Common myeloid progenitor, CD34-positive (primary cell): ENCODE measurements at regions of chr6 and their contacts with region 1.

Region 1: DNA sequence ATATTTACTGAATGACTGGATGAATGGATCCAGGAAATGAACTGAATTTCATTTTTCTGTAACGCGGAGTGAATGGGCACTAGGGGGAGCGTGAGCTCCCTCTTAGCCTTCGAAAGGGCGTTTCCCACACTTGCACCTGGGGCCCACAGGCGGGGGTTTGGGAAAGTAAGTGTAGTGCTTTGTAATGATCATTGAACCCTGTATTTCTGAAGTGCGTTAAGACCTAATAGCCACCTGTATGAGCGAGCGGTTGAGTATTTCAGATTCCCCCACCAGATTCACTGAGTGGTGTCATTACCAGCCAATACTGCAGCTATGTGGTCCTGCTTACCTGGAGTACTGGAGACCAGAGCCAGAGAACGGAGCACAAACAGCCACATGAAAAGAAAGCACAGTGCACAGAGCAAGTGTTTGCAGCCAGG is 10.5 kb downstream of the SYTL3 start:
- DNase-seq: peak in 2 of 3 donors; percentile 51 to 57
- H3K4me3 ChIP-seq: no peak overlapping the region
- H3K27ac ChIP-seq: no peak overlapping the region
- H3K4me1 ChIP-seq: peaks cover 9 to 42% (median 30%) of the 10 kb centered on the region in 4 experiments
- H3K27me3 ChIP-seq: peaks cover 0 to 8% (median 7%) of the 10 kb centered on the region in 5 experiments

Region 2: GRCh38 chr6:158545043-158545966 is 115.0 kb before region 1 on chr6:
- CTCF ChIA-PET with region 1: no interaction called
- POLR2A ChIA-PET with region 1: no interaction called
- DNase-seq: no peak
- H3K4me3 ChIP-seq: no peak overlapping the region
- H3K27ac ChIP-seq: no peak overlapping the region
- H3K4me1 ChIP-seq: no peaks in the 10 kb centered on the region
- H3K27me3 ChIP-seq: peaks cover 0 to 9% (median 0%) of the 10 kb centered on the region in 5 experiments

Region 3: DNA sequence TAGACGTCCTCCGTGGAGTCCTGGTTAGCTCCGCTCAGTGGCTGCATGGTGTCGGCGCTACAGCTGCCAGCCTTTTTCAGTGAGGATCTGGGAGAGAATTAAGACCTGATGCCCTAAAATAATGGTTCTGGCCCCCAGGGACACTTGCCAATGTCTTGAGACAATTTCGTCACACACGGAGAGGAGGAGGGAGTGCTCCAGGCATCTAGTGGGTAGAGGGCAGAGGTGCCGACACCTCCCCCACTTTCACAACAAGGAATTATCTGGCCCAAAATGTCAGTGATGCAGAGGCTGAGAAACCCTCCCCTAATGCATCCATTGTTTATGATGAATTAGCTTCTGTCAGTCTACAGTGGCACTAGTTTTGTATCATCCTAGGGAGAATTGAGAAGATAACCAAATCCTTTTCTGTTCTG is 76.1 kb before region 1 on chr6:
- CTCF ChIA-PET with region 1: no interaction called
- POLR2A ChIA-PET with region 1: no interaction called
- DNase-seq: no peak
- H3K4me3 ChIP-seq: no peak overlapping the region
- H3K27ac ChIP-seq: no peak overlapping the region
- H3K4me1 ChIP-seq: no peaks in the 10 kb centered on the region
- H3K27me3 ChIP-seq: no peaks in the 10 kb centered on the region

Region 4: GRCh38 chr6:158644231-158645063 is 15.9 kb before region 1 on chr6 and contains the start of gene DYNLT1:
- CTCF ChIA-PET with region 1: interaction called, 50 read pairs
- POLR2A ChIA-PET with region 1: no interaction called
- DNase-seq: peak; percentile 78 to 92 (median 90)
- H3K4me3 ChIP-seq: peak within 1 kb of the TSS; percentile 73 to 96 (median 90)
- H3K27ac ChIP-seq: peak within 1 kb of the TSS; percentile 82 to 89
- H3K4me1 ChIP-seq: peaks cover 6 to 32% (median 27%) of the 10 kb centered on the region in 4 experiments
- H3K27me3 ChIP-seq: no peaks in the 10 kb centered on the region

Region 5: DNA sequence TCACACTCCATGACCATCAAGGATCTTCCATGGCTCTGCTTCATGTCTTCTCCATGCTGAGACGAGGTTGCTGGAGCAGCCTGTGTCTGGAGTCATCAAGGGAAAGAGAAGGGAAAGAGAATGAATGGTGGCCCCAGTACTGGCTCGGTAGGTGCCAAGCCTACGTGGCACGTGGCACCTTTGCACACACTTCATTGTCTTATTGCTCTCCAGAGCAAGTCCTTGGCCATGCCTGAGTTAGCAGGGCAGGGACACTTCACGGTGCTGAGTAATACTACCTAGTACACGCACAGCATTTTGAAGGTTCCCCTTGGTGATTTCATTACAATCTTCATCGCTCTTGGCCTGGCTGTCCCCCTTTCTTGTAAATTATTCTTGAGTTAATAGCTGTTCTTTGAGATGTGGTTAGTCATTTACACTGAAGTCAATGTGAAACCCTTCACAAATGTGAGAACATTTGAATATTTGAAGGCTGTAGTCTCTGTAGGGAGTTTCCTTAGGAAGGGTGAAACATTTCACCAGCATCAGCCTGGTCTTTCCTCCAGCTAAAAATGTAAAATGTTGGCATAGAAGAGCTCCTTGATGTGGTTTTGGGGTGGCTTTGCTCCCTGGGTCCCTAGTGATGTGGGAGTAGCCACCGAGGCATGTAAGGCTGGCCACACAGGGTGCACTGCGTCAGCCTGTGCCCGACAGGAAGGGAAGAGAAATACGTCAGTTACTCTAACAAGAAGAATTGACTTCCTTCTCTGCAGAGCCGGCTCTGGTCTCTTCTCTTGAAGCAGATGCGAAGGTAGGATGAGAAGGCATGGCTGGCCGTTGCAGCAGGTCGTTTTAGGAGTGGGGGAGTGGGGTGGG is 10.8 kb before region 1 on chr6 and contains the start of gene SYTL3:
- CTCF ChIA-PET with region 1: interaction called, 50 read pairs
- POLR2A ChIA-PET with region 1: no interaction called
- DNase-seq: peak; percentile 75 to 81 (median 75)
- H3K4me3 ChIP-seq: peak within 1 kb of the TSS in 3 of 7 experiments; percentile 22 to 42 (median 35)
- H3K27ac ChIP-seq: no peak within 1 kb of the TSS
- H3K4me1 ChIP-seq: peaks cover 10 to 46% (median 32%) of the 10 kb centered on the region in 4 experiments
- H3K27me3 ChIP-seq: no peaks in the 10 kb centered on the region

Region 6: DNA sequence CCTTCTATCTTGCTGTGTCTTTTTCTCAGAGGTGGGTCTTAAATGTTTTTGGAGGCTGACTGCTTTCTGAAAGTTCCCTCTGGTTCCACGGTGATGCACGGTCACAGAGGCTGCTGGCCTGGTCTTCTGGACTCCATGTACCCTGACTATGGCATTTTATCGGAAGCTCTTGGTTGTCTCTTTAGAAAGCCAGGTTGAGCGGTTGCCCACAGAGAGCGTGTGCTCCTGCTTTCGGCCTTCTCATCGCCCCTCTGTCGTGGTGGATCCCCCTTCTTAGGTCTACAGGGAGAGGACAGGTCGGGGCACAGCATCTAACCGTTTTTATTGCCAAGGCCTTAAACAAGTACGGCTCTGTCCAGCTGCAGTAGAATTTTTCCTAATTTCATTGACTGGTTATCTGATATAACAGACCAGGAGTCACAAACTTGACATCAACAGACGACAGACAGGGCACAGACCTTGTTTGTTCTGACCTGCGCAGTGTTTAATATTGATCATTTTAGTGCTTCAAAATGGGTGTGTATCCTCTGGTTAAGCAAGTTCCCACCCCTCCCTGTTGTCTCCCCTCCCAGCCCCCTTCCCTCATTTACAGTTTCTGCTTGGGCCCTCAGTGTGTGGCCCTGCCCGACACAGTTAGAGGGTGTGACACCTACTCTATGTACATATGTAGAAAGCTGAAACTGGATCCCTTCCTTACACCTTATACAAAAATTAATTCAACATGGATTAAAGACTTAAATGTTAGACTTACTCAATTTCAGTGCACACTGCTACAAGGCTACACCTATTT is 14.2 kb after region 1 on chr6:
- CTCF ChIA-PET with region 1: interaction called, 12 read pairs
- POLR2A ChIA-PET with region 1: no interaction called
- DNase-seq: no peak
- H3K4me3 ChIP-seq: no peak overlapping the region
- H3K27ac ChIP-seq: no peak overlapping the region
- H3K4me1 ChIP-seq: no peaks in the 10 kb centered on the region
- H3K27me3 ChIP-seq: no peaks in the 10 kb centered on the region

Region 7: DNA sequence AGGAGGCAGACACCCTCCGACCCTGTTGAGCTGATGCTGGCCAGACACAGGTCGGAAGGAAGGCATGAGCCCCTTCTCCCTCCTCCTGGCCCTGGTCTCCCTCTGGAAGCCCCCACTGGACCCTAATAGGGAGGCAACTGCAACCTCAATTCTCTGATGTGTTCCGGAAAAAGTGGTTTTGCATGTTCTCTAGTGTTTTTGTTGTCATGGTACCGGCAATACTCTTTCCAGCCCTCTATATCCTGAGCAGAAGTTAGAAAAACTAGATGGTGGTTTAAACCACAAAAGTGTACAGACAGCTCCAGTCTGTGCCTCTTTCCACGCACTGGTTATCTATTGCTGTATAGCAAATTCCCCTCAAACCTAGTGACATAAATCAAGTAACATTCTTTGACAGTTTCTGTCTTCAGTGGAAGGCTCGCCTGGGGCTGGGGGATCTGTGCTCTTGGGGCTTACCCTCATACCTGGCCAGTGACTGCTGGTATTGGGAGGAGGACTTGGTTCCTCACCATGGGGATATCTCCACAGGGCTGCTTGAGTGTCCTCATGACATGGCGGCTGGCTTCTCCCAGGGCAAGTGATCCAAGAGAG is 26.5 kb after region 1 on chr6:
- CTCF ChIA-PET with region 1: interaction called, 168 read pairs
- POLR2A ChIA-PET with region 1: interaction called, 4 read pairs
- DNase-seq: peak; percentile 92 to 98 (median 97)
- H3K4me3 ChIP-seq: peak overlapping the region in 5 of 7 experiments; percentile 0 to 64 (median 35)
- H3K27ac ChIP-seq: peak overlapping the region; percentile 62 to 86
- H3K4me1 ChIP-seq: peaks cover 14 to 35% (median 33%) of the 10 kb centered on the region in 4 experiments
- H3K27me3 ChIP-seq: no peaks in the 10 kb centered on the region

Region 8: DNA sequence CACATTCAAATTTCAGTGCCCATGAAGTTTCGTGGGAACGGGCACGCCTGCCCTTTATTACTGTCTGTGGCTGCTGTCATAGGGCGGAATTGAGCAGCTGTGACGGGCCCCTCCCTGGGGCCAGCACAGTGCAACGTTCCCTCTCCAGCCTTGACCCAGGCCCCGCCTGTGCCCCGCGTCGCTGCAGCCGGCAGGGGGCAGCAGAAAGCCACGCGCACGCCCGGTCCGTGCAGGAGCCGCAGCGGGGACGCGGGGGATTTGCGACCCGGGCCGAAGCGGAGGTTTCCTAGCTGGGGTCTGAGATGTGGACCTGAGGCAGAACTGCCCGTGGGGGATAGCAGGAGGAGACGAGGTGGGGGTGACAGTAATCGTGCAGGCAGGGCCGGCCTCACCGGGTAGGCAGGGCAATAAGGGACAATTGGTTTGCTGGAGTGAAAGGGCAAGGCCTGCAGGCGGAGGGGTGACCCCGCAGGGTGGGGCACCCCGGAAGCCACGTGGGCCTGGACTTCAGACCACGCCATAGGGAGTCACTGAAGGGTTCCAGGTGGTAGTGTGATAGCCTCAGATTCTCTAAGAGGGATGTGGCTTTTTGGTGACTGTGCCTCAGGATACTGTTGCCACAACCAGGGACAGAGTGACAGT is 44.0 kb after region 1 on chr6:
- CTCF ChIA-PET with region 1: interaction called, 23 read pairs
- POLR2A ChIA-PET with region 1: no interaction called
- DNase-seq: peak; percentile 61 to 83 (median 76)
- H3K4me3 ChIP-seq: peak overlapping the region in 6 of 7 experiments; percentile 21 to 74 (median 47)
- H3K27ac ChIP-seq: no peak overlapping the region
- H3K4me1 ChIP-seq: peaks cover 0 to 7% (median 7%) of the 10 kb centered on the region in 4 experiments
- H3K27me3 ChIP-seq: no peaks in the 10 kb centered on the region